ENCODE measurements at regions of chrX and their contacts with region 1.

Region 1: GRCh38 chrX:1481636-1482529 is 29.2 kb upstream of the ASMTL start:
- DNase-seq: peak; percentile 88
- H3K4me3 Mint-ChIP-seq: peak overlapping the region; percentile 76
- H3K27ac Mint-ChIP-seq: peak overlapping the region; percentile 97
- H3K4me1 Mint-ChIP-seq: peaks cover 72% of the 10 kb centered on the region
- H3K27me3 Mint-ChIP-seq: no peaks in the 10 kb centered on the region

Region 2: GRCh38 chrX:1462596-1463251 is 19.2 kb before region 1 on chrX:
- CTCF ChIA-PET with region 1: no interaction called
- POLR2A ChIA-PET with region 1: no interaction called
- intact Hi-C with region 1: loop called (anchors 2 kb)
- DNase-seq: peak; percentile 89
- H3K4me3 Mint-ChIP-seq: peak overlapping the region; percentile 61
- H3K27ac Mint-ChIP-seq: peak overlapping the region; percentile 96
- H3K4me1 Mint-ChIP-seq: peaks cover 60% of the 10 kb centered on the region
- H3K27me3 Mint-ChIP-seq: no peaks in the 10 kb centered on the region

Region 3: DNA sequence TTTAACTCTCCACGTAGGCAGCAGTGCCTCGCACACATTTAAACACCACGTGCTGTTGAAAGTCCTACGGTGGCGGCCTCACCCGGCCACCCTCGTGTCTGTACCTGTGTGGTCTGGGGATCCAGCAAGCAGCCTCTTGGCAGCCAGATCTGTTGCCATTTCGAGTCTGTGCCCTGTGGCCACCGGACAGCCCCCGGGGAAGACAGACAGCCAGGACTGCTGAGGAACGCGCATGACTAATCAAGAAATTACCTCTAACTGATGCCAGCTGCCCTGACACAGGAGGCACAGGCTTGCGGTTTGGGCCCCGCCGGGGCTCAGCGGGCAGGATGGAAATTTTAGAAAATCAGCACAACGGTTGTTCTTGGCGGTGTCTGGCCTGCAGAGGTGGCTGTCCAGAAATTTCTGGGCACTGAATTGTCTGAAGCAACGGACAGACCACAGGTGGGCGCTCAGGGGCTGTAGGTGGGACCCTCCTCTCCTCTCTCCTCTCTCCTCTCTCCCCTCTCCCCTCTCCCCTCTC is 13.6 kb before region 1 on chrX:
- CTCF ChIA-PET with region 1: no interaction called
- POLR2A ChIA-PET with region 1: no interaction called
- intact Hi-C with region 1: loop called (anchors 1 kb)
- DNase-seq: peak; percentile 93
- H3K4me3 Mint-ChIP-seq: peak overlapping the region; percentile 64
- H3K27ac Mint-ChIP-seq: peak overlapping the region; percentile 91
- H3K4me1 Mint-ChIP-seq: peaks cover 89% of the 10 kb centered on the region
- H3K27me3 Mint-ChIP-seq: no peaks in the 10 kb centered on the region

Region 4: DNA sequence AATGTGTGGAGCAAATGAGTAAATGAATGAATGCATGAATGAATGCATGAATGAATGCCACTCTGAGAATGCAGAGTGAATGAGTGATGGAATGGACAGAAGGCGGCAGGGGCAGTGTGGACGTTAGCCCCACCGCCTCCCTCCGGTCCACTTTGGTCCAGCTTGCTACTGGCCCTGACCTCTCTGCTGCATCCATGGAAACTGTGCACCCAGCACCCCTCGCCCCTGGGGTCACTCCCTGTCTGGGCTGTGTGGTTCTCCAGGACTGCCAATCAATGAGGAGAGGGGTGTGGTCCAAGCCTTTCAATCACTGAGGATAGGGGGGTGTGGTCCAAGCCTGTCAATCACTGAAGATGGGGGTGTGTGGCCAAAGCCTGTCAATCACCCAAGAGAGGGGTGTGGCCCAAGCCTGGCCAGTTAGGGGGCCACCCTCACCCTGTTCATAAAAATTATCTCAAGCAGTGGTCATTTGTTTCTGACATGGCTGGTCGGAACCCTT is 10.0 kb after region 1 on chrX:
- CTCF ChIA-PET with region 1: no interaction called
- POLR2A ChIA-PET with region 1: no interaction called
- intact Hi-C with region 1: loop called (anchors 1 kb)
- DNase-seq: peak; percentile 82
- H3K4me3 Mint-ChIP-seq: no peak overlapping the region
- H3K27ac Mint-ChIP-seq: peak overlapping the region; percentile 59
- H3K4me1 Mint-ChIP-seq: peaks cover 18% of the 10 kb centered on the region
- H3K27me3 Mint-ChIP-seq: no peaks in the 10 kb centered on the region

Region 5: DNA sequence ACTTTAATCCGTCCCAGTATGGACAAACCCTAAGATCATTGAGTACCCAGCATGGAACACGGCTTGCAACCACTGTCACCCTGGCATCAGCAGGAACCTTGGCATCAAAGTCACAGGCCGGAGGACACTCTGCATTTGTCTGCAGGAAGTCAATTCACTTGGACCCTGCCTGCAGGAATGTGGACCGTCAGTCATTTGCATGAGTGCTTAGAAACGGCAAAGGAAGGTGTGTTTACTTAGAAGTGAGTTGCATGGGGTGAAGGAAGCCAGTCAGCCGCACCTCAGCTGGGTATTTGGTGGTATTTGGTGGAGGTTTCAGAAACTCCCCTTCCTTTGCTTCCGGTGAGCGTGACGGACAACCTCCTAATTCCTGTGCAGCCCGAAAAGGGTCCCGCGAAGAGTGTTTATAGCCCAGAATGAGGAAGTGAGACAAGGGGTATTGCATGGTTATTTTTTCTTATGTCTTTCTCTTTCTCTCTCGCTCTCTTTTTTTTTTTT is 39.6 kb after region 1 on chrX:
- CTCF ChIA-PET with region 1: no interaction called
- POLR2A ChIA-PET with region 1: no interaction called
- intact Hi-C with region 1: loop called (anchors 1 kb)
- DNase-seq: peak; percentile 85
- H3K4me3 Mint-ChIP-seq: peak overlapping the region; percentile 73
- H3K27ac Mint-ChIP-seq: peak overlapping the region; percentile 97
- H3K4me1 Mint-ChIP-seq: peaks cover 52% of the 10 kb centered on the region
- H3K27me3 Mint-ChIP-seq: no peaks in the 10 kb centered on the region

Region 6: DNA sequence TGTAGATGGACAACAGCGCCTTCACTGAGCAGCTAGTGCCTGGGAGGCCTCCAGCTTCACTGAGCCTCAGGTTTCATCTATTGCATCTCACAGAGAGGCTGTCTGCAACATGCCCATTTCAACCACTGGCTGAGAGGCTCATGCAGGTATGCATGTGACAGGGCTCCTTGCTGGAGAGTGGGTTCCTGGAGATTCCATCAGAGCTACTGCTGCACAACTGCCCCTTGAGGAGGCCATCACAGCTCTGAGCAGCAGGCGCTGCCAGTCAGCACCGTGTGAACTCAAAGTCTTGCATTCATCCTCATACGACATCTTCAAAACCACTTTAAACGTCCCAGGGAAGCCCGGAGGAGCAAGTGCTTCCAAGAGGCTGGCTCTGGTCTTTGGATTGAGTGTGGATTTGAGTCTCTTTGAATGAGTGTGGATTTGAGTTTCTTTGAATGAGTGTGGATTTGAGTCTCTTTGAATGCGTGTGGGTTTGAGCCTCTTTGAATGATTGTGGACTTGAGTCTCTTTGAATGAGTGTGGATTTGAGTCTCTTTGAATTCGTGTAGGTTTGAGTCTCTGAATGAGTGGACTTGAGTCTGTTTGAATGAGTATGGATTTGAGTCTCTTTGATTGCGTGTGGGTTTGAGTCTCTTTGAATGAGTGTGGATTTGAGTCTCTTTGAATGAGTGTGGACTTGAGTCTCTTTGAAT is 46.5 kb after region 1 on chrX:
- CTCF ChIA-PET with region 1: no interaction called
- POLR2A ChIA-PET with region 1: no interaction called
- intact Hi-C with region 1: loop called (anchors 2 kb)
- DNase-seq: peak; percentile 60
- H3K4me3 Mint-ChIP-seq: no peak overlapping the region
- H3K27ac Mint-ChIP-seq: no peak overlapping the region
- H3K4me1 Mint-ChIP-seq: peaks cover 5% of the 10 kb centered on the region
- H3K27me3 Mint-ChIP-seq: no peaks in the 10 kb centered on the region

Measured in activated CD4-positive, alpha-beta memory T cell treated with anti-CD3 and anti-CD28 coated beads for 36 hours (primary cell).